Activated B cell treated with CpG ODN at 0.5 μM for 24 hours (primary cell): ENCODE measurements at regions of chr19 and their contacts with region 1.

Region 1: DNA sequence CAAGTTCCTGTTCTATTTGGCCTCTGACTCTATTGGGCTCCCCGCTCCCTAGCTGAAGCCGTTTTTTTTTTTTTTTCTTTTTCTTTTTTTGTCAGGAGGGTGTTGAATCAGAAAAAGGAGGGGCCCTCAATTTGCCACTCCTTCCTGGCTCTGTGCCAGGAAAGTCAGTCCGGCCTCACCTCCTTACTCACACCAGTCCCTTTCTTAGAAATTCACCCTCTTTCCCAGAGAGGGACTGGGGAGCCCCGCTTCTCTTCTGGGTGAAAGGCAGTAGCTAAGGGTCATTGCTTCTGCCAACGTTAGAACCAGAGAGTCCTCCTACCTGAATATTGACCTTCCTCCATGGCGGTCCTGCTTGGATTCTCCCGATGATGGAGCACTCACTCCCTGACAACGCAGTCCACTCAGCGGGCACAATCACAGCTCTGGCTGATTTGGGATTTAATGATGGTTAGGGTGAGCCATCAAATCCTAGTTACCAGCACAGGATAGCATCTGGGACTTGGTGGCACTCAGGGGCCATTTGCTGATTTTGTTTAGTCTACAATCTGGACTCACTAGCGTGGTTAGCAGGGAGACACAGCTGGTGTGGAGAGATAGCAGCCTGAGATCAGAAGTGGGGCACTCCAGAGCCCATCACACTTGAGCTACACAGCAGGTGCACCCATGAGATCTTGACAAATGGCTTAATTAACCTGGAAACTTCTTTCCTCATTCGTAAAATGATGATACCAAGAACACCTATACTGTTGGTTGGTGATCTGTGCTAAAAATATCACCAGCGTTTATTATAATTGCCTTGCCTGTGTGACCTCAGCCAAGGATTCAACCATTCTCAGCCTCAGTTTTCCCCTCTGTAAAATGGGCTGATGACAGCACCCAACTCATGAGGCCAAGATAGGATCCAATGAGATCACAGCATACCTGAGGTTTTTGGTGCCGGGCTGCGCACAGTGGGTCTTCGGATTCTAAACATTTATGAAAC is 2.2 kb downstream of the FCER2 start:
- DNase-seq: no peak
- ATAC-seq: no peak
- H3K4me3 Mint-ChIP-seq: peak overlapping the region; percentile 84
- H3K27ac Mint-ChIP-seq: peak overlapping the region; percentile 97
- H3K4me1 Mint-ChIP-seq: peaks cover 99% of the 10 kb centered on the region
- H3K27me3 Mint-ChIP-seq: no peaks in the 10 kb centered on the region
- CTCF ChIP-seq: no peak

Region 2: DNA sequence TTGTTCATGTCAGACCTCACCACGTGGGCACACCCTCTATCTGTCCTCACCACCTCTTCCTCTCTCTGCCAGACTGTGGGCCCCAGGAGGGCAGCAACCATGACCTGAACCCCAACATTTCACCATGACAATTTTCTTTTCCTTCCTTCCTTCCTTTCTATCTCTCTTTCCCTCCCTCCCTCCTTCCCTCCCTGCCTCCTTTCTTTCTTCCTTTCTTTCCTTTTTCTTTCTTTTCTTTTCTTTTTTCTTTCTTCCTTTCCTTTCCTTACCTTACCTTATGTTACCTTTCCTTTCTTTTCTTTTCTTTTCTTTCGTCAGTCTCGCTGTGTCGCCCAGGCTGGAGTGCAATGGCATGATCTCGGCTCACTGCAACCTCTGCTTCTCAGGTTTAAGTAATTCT is 10.9 kb after region 1 on chr19:
- CTCF ChIA-PET with region 1: interaction called, 4 read pairs
- POLR2A ChIA-PET with region 1: interaction called, 25 read pairs
- intact Hi-C with region 1: no loop called
- DNase-seq: no peak
- ATAC-seq: no peak
- H3K4me3 Mint-ChIP-seq: peak overlapping the region; percentile 30
- H3K27ac Mint-ChIP-seq: peak overlapping the region; percentile 79
- H3K4me1 Mint-ChIP-seq: peaks cover 79% of the 10 kb centered on the region
- H3K27me3 Mint-ChIP-seq: no peaks in the 10 kb centered on the region
- CTCF ChIP-seq: no peak

Region 3: GRCh38 chr19:9610484-9611113 is 1910.9 kb after region 1 on chr19:
- CTCF ChIA-PET with region 1: no interaction called
- POLR2A ChIA-PET with region 1: no interaction called
- intact Hi-C with region 1: no loop called
- DNase-seq: no peak
- ATAC-seq: no peak
- H3K4me3 Mint-ChIP-seq: no peak overlapping the region
- H3K27ac Mint-ChIP-seq: no peak overlapping the region
- H3K4me1 Mint-ChIP-seq: no peaks in the 10 kb centered on the region
- H3K27me3 Mint-ChIP-seq: no peaks in the 10 kb centered on the region
- CTCF ChIP-seq: no peak